Endothelial cell of umbilical vein (primary cell): ENCODE measurements at regions of chr13 and their contacts with region 1.

Region 1: GRCh38 chr13:31044377-31045285 is 112.2 kb downstream of the TEX26 start:
- DNase-seq: peak; percentile 83
- H3K4me3 ChIP-seq: no peak overlapping the region
- H3K27ac ChIP-seq: peak overlapping the region; percentile 68
- H3K4me1 ChIP-seq: peaks cover 35% of the 10 kb centered on the region
- H3K27me3 ChIP-seq: no peaks in the 10 kb centered on the region
- CTCF ChIP-seq: peak; percentile 92 to 93
- POLR2A ChIP-seq: no peak

Region 2: GRCh38 chr13:30364876-30365275 is 679.8 kb before region 1 on chr13:
- CTCF ChIA-PET with region 1: no interaction called
- POLR2A ChIA-PET with region 1: no interaction called
- dilution Hi-C with region 1: no loop called
- intact Hi-C with region 1: loop called (anchors 10 kb)
- DNase-seq: peak; percentile 95
- H3K4me3 ChIP-seq: peak overlapping the region in 1 of 3 experiments; percentile 29
- H3K27ac ChIP-seq: peak overlapping the region; percentile 95
- H3K4me1 ChIP-seq: peaks cover 30% of the 10 kb centered on the region
- H3K27me3 ChIP-seq: no peaks in the 10 kb centered on the region
- CTCF ChIP-seq: no peak
- POLR2A ChIP-seq: peak; percentile 61

Region 3: GRCh38 chr13:30617315-30618185 is 427.1 kb before region 1 on chr13 and contains the start of gene USPL1:
- CTCF ChIA-PET with region 1: interaction called, 6 read pairs
- POLR2A ChIA-PET with region 1: no interaction called
- dilution Hi-C with region 1: no loop called
- intact Hi-C with region 1: loop called (anchors 1 kb)
- DNase-seq: peak; percentile 100
- H3K4me3 ChIP-seq: peak within 1 kb of the TSS; percentile 83 to 95 (median 95)
- H3K27ac ChIP-seq: peak within 1 kb of the TSS; percentile 87
- H3K4me1 ChIP-seq: peaks cover 36% of the 10 kb centered on the region
- H3K27me3 ChIP-seq: no peaks in the 10 kb centered on the region
- CTCF ChIP-seq: peak in 1 of 2 donors; percentile 31
- POLR2A ChIP-seq: no peak
- total RNA-seq, gene USPL1: 18.8 and 21.0 TPM in 2 replicates

Region 4: GRCh38 chr13:30802953-30803478 is 241.6 kb before region 1 on chr13:
- CTCF ChIA-PET with region 1: interaction called, 17 read pairs
- POLR2A ChIA-PET with region 1: no interaction called
- dilution Hi-C with region 1: no loop called
- intact Hi-C with region 1: loop called (anchors 1 kb)
- DNase-seq: peak; percentile 74
- H3K4me3 ChIP-seq: peak overlapping the region in 1 of 3 experiments; percentile 23
- H3K27ac ChIP-seq: no peak overlapping the region
- H3K4me1 ChIP-seq: peaks cover 28% of the 10 kb centered on the region
- H3K27me3 ChIP-seq: no peaks in the 10 kb centered on the region
- CTCF ChIP-seq: peak; percentile 93 to 94
- POLR2A ChIP-seq: no peak

Region 5: GRCh38 chr13:30978981-30979956 is 65.4 kb before region 1 on chr13:
- CTCF ChIA-PET with region 1: interaction called, 14 read pairs
- POLR2A ChIA-PET with region 1: no interaction called
- dilution Hi-C with region 1: no loop called
- intact Hi-C with region 1: loop called (anchors 2 kb)
- DNase-seq: peak; percentile 5
- H3K4me3 ChIP-seq: no peak overlapping the region
- H3K27ac ChIP-seq: no peak overlapping the region
- H3K4me1 ChIP-seq: peaks cover 3% of the 10 kb centered on the region
- H3K27me3 ChIP-seq: peaks cover 0 to 3% of the 10 kb centered on the region in 2 experiments
- CTCF ChIP-seq: peak; percentile 50 to 77
- POLR2A ChIP-seq: no peak

Region 6: GRCh38 chr13:31131470-31131961 is 86.9 kb after region 1 on chr13:
- CTCF ChIA-PET with region 1: interaction called, 3 read pairs
- POLR2A ChIA-PET with region 1: no interaction called
- dilution Hi-C with region 1: no loop called
- intact Hi-C with region 1: loop called (anchors 5 kb)
- DNase-seq: no peak
- H3K4me3 ChIP-seq: no peak overlapping the region
- H3K27ac ChIP-seq: no peak overlapping the region
- H3K4me1 ChIP-seq: no peaks in the 10 kb centered on the region
- H3K27me3 ChIP-seq: peaks cover 0 to 12% of the 10 kb centered on the region in 2 experiments
- CTCF ChIP-seq: no peak
- POLR2A ChIP-seq: no peak

Region 7: GRCh38 chr13:31242916-31243315 is 198.3 kb after region 1 on chr13:
- CTCF ChIA-PET with region 1: no interaction called
- POLR2A ChIA-PET with region 1: no interaction called
- dilution Hi-C with region 1: no loop called
- intact Hi-C with region 1: no loop called
- DNase-seq: no peak
- H3K4me3 ChIP-seq: no peak overlapping the region
- H3K27ac ChIP-seq: no peak overlapping the region
- H3K4me1 ChIP-seq: no peaks in the 10 kb centered on the region
- H3K27me3 ChIP-seq: no peaks in the 10 kb centered on the region
- CTCF ChIP-seq: no peak
- POLR2A ChIP-seq: no peak

Region 8: GRCh38 chr13:31742097-31742734 is 697.6 kb after region 1 on chr13:
- CTCF ChIA-PET with region 1: no interaction called
- POLR2A ChIA-PET with region 1: no interaction called
- dilution Hi-C with region 1: no loop called
- intact Hi-C with region 1: no loop called
- DNase-seq: peak; percentile 64
- H3K4me3 ChIP-seq: no peak overlapping the region
- H3K27ac ChIP-seq: no peak overlapping the region
- H3K4me1 ChIP-seq: no peaks in the 10 kb centered on the region
- H3K27me3 ChIP-seq: peaks cover 0 to 2% of the 10 kb centered on the region in 2 experiments
- CTCF ChIP-seq: peak; percentile 88 to 95
- POLR2A ChIP-seq: no peak